ENCODE measurements at regions of chr22 and their contacts with region 1.

Region 1: GRCh38 chr22:37588546-37589215 is 8.8 kb upstream of the LGALS2 start:
- DNase-seq: no peak
- ATAC-seq: peak; percentile 56
- H3K4me3 ChIP-seq: no peak overlapping the region
- H3K27ac ChIP-seq: no peak overlapping the region
- H3K4me1 ChIP-seq: peaks cover 31% of the 10 kb centered on the region
- H3K27me3 ChIP-seq: no peaks in the 10 kb centered on the region
- CTCF ChIP-seq: no peak
- EP300 ChIP-seq: no peak
- POLR2A ChIP-seq: no peak
- RAD21 ChIP-seq: no peak

Region 2: GRCh38 chr22:36775964-36776669 is 812.6 kb before region 1 on chr22 and contains the start of gene IFT27:
- CTCF ChIA-PET with region 1: no interaction called
- POLR2A ChIA-PET with region 1: no interaction called
- RAD21 ChIA-PET with region 1: no interaction called
- SMC1A ChIA-PET with region 1: no interaction called
- in situ Hi-C with region 1: no loop called
- intact Hi-C with region 1: no loop called
- DNase-seq: peak; percentile 99
- ATAC-seq: peak; percentile 97
- H3K4me3 ChIP-seq: peak within 1 kb of the TSS; percentile 87
- H3K27ac ChIP-seq: peak within 1 kb of the TSS; percentile 37; the same call in 1 of the 2 replicates
- H3K4me1 ChIP-seq: peaks cover 11% of the 10 kb centered on the region
- H3K27me3 ChIP-seq: no peaks in the 10 kb centered on the region
- CTCF ChIP-seq: no peak
- EP300 ChIP-seq: no peak
- POLR2A ChIP-seq: peak; percentile 82
- RAD21 ChIP-seq: no peak
- polyA plus RNA-seq, gene IFT27: 2.7 to 3.0 TPM

Region 3: GRCh38 chr22:37457093-37457893 is 131.4 kb before region 1 on chr22:
- CTCF ChIA-PET with region 1: interaction called, 10 read pairs
- POLR2A ChIA-PET with region 1: no interaction called
- RAD21 ChIA-PET with region 1: no interaction called
- SMC1A ChIA-PET with region 1: interaction called, 3 read pairs
- in situ Hi-C with region 1: no loop called
- intact Hi-C with region 1: no loop called
- DNase-seq: peak; percentile 24
- ATAC-seq: peak; percentile 100
- H3K4me3 ChIP-seq: no peak overlapping the region
- H3K27ac ChIP-seq: no peak overlapping the region
- H3K4me1 ChIP-seq: no peaks in the 10 kb centered on the region
- H3K27me3 ChIP-seq: no peaks in the 10 kb centered on the region
- CTCF ChIP-seq: peak; percentile 88 to 98 (median 96)
- EP300 ChIP-seq: no peak
- POLR2A ChIP-seq: no peak
- RAD21 ChIP-seq: peak; percentile 97

Region 4: DNA sequence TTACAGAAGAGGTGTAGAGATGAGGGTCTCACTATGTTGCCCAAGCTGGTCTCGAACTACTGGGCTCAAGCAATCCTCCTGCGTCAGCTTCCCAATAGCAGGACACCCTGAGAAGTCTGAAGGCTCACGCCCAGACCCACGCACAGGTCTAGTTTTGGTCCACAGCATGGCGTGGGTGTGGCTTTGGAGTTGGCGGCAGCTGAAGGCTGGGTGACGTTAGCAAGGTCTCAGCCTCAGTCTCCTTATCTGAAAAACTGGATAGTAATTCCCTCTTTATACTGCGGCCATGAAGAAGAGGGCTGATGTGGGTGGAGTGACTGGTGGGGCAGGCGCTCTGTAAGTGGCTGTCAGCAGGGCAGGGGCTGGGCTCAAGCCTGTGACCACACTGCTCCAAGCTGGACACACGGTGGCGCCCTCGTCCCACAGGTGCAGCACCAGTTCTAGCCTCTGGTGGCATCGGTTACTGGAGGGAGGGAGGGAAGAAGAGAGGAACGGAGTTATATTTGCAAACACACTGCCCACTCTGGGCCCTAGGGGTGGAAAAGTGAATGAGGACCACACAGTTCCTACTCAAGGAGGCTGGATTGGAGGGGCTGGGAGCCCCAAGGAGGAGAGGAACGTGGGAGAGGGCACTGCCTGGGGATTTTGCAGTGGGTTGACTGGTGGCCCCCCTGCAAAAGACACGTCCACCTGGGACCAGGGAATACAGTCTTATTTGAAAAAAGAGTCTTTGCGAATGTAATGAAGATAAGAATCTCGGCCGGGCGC is 49.9 kb before region 1 on chr22:
- CTCF ChIA-PET with region 1: interaction called, 419 read pairs
- POLR2A ChIA-PET with region 1: interaction called, 12 read pairs
- RAD21 ChIA-PET with region 1: interaction called, 183 read pairs
- SMC1A ChIA-PET with region 1: interaction called, 216 read pairs
- in situ Hi-C with region 1: no loop called
- intact Hi-C with region 1: loop called (anchors 1 kb)
- DNase-seq: peak; percentile 80
- ATAC-seq: peak; percentile 98
- H3K4me3 ChIP-seq: no peak overlapping the region
- H3K27ac ChIP-seq: no peak overlapping the region
- H3K4me1 ChIP-seq: peaks cover 27% of the 10 kb centered on the region
- H3K27me3 ChIP-seq: no peaks in the 10 kb centered on the region
- CTCF ChIP-seq: peak; percentile 96 to 99 (median 96)
- EP300 ChIP-seq: peak in 1 of 2 experiments; percentile 37; a peak in 1 of 4 replicates
- POLR2A ChIP-seq: no peak
- RAD21 ChIP-seq: peak; percentile 96

Region 5: DNA sequence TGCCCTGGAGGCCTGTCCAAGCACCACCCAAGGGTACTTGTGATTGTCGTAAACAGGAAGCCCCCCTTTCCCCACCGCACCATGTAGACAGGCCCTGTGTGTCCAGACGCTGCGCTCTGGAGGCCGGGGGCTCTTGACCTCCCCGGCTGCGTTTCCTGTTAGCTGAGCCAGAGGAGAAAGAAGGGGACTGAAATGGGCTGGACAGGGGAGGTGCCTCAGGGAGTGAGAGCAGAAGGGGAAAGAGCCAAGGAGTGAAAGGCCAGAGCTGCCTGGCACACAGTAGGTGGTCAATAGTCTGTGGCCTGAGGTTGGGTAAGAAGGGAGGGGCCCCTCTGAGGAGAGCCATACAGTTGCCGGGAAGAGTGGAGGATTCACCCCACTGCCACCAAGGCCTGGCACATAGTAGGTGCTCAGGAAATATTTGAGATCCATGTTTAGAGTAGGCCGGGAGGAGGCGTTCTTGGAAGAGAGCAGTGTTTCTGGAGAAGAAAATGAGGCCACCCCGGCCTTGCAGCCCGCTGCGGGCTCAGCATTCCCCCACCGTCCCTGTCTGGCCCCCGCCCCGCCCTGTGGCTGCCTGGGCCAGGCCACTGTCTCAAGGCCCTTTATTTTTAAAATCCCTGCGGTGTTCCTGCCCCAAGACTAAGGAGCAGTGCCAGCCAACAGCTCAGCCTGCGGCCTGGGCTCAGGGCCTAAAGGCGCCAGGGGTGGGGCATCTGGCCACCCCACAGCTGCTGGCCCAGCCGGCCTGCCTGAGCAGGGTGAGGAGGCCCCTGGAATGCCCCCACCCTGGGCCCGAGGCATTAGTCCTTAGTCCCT is 42.0 kb before region 1 on chr22:
- CTCF ChIA-PET with region 1: interaction called, 419 read pairs
- POLR2A ChIA-PET with region 1: interaction called, 12 read pairs
- RAD21 ChIA-PET with region 1: interaction called, 183 read pairs
- SMC1A ChIA-PET with region 1: interaction called, 216 read pairs
- in situ Hi-C with region 1: no loop called
- intact Hi-C with region 1: no loop called
- DNase-seq: no peak
- ATAC-seq: no peak
- H3K4me3 ChIP-seq: no peak overlapping the region
- H3K27ac ChIP-seq: no peak overlapping the region
- H3K4me1 ChIP-seq: peaks cover 8% of the 10 kb centered on the region
- H3K27me3 ChIP-seq: peaks cover 0 to 2% of the 10 kb centered on the region in 2 experiments; a peak in 1 of 4 replicates
- CTCF ChIP-seq: no peak
- EP300 ChIP-seq: no peak
- POLR2A ChIP-seq: no peak
- RAD21 ChIP-seq: no peak

Region 6: DNA sequence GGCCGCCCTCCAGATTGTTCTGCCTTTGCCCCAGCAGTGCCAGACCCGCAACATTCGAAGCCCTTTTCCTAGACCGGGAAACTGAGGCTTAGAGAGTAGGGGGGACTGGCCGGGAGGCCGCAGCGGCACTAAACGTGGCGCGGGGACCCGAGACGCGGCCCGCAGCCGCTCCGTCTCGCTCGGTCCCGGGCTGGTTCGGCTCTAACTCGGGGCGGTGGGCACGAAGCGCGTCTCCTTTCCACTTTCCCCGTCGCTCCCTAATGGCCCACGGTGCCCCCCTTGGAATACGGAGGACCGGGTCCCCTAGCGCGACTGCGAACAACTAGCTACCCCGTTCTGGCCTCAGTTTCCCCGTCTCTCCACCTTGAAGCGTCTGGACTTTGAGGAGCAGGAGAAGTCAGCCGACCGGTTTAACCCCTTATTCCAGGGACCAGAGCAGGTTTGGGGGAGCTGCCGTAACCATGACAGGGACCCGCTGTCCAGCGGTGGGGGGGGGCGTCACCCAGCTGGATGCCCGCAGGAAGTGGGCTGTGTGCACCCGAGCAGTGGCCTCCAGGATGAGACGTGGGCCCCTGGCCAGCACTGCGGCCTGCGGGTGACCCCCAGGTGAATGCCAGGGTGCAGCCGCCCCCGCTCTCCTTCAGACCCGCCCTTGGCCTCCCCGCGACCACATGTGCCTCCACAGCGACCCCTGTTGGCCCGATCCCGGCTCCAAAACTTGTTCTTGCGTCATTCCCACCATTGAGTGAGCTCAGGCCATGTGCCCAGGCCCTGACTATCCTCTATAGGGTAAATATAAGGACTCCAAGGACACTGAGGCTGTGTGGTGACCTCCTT is 27.3 kb before region 1 on chr22:
- CTCF ChIA-PET with region 1: interaction called, 528 read pairs
- POLR2A ChIA-PET with region 1: interaction called, 21 read pairs
- RAD21 ChIA-PET with region 1: interaction called, 154 read pairs
- SMC1A ChIA-PET with region 1: interaction called, 117 read pairs
- in situ Hi-C with region 1: no loop called
- intact Hi-C with region 1: no loop called
- DNase-seq: no peak
- ATAC-seq: peak; percentile 80
- H3K4me3 ChIP-seq: 0 out of 2 replicates have a peak overlapping the region, but pooled peaks have one; percentile 11
- H3K27ac ChIP-seq: no peak overlapping the region
- H3K4me1 ChIP-seq: peaks cover 3% of the 10 kb centered on the region
- H3K27me3 ChIP-seq: peaks cover 16% of the 10 kb centered on the region in 2 experiments
- CTCF ChIP-seq: peak; percentile 58 to 82 (median 71)
- EP300 ChIP-seq: no peak
- POLR2A ChIP-seq: no peak
- RAD21 ChIP-seq: peak; percentile 29; the same call in 1 of the 2 replicates

Region 7: GRCh38 chr22:37575490-37576003 is 13.1 kb before region 1 on chr22:
- CTCF ChIA-PET with region 1: interaction called, 528 read pairs
- POLR2A ChIA-PET with region 1: interaction called, 13 read pairs
- RAD21 ChIA-PET with region 1: interaction called, 154 read pairs
- SMC1A ChIA-PET with region 1: interaction called, 117 read pairs
- in situ Hi-C with region 1: no loop called
- intact Hi-C with region 1: no loop called
- DNase-seq: no peak
- ATAC-seq: no peak
- H3K4me3 ChIP-seq: no peak overlapping the region
- H3K27ac ChIP-seq: no peak overlapping the region
- H3K4me1 ChIP-seq: peaks cover 7% of the 10 kb centered on the region
- H3K27me3 ChIP-seq: no peaks in the 10 kb centered on the region; a peak in 1 of 4 replicates
- CTCF ChIP-seq: no peak
- EP300 ChIP-seq: no peak
- POLR2A ChIP-seq: no peak
- RAD21 ChIP-seq: no peak

Measured in GM12878 (cell line).